Mucosa of descending colon (tissue), 3 donors: ENCODE measurements at regions of chr6 and their contacts with region 1.

Region 1: GRCh38 chr6:42532038-42532669 is 31.7 kb upstream of the UBR2 start:
- DNase-seq: peak in 1 of 3 donors; percentile 31
- ATAC-seq: peak; percentile 80
- H3K4me3 ChIP-seq: no peak overlapping the region
- H3K4me1 ChIP-seq: no peaks in the 10 kb centered on the region
- CTCF ChIP-seq: peak; percentile 50

Region 2: DNA sequence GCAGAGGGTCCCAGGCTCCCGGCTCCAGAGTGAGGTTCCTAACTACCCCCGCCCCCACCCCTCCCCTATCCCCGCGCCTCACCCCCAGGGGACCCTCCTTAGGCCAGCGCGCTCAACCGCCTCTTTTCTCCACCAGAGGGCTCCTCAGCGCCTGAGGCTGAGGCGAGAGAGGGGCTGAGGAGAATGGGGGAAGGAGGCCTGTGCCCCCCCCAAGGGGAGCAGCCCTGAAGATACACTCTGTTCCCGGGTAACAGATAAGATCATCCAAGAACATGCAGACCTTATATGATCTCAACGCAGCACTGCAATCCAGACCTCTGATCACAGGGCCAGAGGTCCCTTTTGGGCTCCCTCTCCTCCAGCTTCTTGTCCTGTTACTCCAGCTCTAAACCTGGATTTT is 271.2 kb before region 1 on chr6:
- intact Hi-C with region 1: loop called in 1 of 2 experiments (anchors 10 kb)
- DNase-seq: peak in 1 of 3 donors; percentile 42
- ATAC-seq: peak; percentile 67
- H3K4me3 ChIP-seq: no peak overlapping the region
- H3K4me1 ChIP-seq: peaks cover 8% of the 10 kb centered on the region
- CTCF ChIP-seq: no peak